Right ventricle myocardium inferior (tissue), 1 donor: ENCODE measurements at regions of chr14 and their contacts with region 1.

Region 1: DNA sequence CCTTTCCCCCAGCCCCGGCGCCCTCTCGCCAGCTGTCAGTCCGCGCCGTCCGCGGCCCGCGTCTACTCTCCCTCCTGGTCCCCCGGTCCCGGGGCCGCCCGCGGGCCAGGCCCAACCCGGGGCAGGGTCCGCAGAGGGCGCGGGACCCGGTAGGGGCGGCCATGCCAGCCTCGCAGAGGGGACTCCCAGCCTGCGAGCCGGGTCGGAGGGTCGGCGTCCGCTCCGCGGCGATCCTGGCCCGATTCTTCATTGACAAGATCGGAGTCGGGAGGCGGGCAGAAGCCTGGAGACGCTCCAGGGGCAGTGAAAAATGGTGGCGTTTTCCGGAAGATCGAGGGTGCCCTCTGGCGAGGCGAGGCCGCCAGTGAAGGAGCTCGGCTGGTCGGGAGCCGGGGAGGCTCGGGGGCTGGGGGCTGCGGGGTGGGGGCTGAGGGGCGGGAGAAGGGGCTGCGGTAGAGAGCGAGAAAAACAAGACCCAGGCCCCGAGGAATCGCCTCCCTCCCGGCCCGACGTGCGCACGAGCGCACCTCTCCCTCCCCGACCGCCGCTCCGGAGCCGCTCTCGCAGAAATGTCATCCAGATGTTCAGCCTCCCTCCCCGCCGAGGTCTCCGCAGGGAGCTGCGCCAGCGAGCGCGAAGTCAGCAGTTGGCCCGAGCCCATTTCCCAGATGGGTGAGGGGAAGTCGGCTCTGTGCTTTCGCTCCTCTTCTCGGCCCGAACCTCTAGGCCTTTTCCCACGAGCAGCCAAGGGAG is 647 bp upstream of the TGFB3 start:
- DNase-seq: peak; percentile 88
- ATAC-seq: peak; percentile 69

Region 2: GRCh38 chr14:75794615-75795038 is 187.8 kb before region 1 on chr14:
- intact Hi-C with region 1: loop called (anchors 2 kb)
- DNase-seq: no peak
- ATAC-seq: peak; percentile 95

Region 3: GRCh38 chr14:75837151-75837787 is 145.2 kb before region 1 on chr14:
- intact Hi-C with region 1: no loop called
- DNase-seq: no peak
- ATAC-seq: no peak

Region 4: GRCh38 chr14:75906676-75907280 is 75.7 kb before region 1 on chr14:
- intact Hi-C with region 1: loop called (anchors 1 kb)
- DNase-seq: no peak
- ATAC-seq: peak; percentile 55

Region 5: GRCh38 chr14:76101377-76102010 is 119.1 kb after region 1 on chr14:
- intact Hi-C with region 1: no loop called
- DNase-seq: no peak
- ATAC-seq: no peak